ENCODE measurements at regions of chr5 and their contacts with region 1.

Region 1: GRCh38 chr5:109388407-109388806 is 21.4 kb downstream of the PJA2 start:
- DNase-seq: no peak

Region 2: GRCh38 chr5:109242518-109242917 is 145.9 kb before region 1 on chr5:
- CTCF ChIA-PET with region 1: interaction called, 11 read pairs
- POLR2A ChIA-PET with region 1: no interaction called
- DNase-seq: no peak

Region 3: DNA sequence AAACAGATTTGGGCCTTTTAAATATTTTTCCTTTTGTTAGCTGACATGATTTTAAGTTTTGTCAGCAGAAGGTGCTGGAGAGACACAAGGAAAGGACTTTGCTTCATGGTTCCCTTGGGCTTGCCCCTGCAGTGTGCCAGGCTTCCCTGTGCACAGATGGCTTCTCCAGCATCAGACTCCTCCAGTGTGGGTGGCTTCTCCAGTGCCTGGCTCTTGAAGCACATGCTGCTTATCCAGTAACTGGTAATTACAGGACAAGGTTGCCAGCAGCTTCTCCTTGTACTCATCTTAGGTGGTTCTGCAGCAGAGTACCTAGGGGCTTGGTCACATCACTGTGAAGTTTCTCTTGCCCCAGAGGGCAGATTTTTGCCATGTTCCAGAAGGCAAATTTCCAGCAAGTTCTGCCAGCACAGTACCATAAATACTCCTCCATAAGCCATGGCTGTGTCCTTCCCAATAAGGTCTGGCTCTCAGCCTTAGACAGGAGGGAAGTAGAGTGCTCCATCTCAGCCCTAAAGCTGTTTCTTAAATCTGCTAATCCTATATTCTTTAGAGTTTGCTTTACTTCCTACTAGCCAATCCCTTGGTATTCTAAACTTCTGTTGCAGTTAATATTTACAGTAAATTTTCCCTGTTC is 41.0 kb before region 1 on chr5:
- CTCF ChIA-PET with region 1: no interaction called
- POLR2A ChIA-PET with region 1: no interaction called
- DNase-seq: no peak

Measured in HEK293T (cell line).